WTC11 (cell line): ENCODE measurements at regions of chr7 and their contacts with region 1.

Region 1: DNA sequence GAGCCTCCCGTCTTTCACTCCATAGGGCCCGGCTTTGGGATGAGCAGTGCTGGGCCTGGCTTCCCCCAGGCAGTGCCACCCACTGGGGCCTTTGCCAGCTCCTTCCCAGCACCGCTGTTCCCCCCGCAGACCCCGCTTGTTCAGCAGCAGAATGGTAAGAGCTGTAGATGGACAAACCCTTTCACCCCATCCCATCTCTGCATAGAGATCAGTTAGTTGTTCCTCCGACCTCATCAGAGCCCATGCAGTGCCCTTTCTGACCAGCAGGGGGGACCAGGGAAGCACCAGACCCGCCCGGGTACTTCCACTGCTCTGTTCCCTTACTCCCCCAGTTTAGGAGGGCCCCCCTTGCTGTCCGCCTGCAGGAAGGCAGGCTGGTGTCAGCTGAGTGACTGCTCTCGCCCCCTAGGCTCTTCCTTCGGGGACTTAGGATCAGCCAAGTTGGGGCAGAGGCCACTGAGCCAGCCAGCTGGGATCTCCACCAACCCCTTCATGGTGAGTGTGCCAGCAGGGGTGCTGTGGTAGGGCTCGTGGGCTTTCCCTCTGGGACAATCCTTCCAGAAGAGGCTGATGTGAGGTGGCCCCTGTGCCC is 9.8 kb downstream of the SAP25 start:
- DNase-seq: peak; percentile 94
- ATAC-seq: peak; percentile 72
- H3K4me3 Mint-ChIP-seq: no peak overlapping the region
- H3K27ac Mint-ChIP-seq: no peak overlapping the region
- H3K4me1 Mint-ChIP-seq: peaks cover 23% of the 10 kb centered on the region
- H3K27me3 Mint-ChIP-seq: no peaks in the 10 kb centered on the region; the same call in 1 of the 2 replicates
- CTCF ChIP-seq: peak; percentile 99

Region 2: GRCh38 chr7:100428199-100428966 is 135.5 kb before region 1 on chr7 and contains the start of gene ZCWPW1:
- CTCF ChIA-PET with region 1: interaction called, 10 read pairs
- POLR2A ChIA-PET with region 1: no interaction called
- DNase-seq: peak; percentile 95
- ATAC-seq: peak; percentile 47
- H3K4me3 Mint-ChIP-seq: peak within 1 kb of the TSS; percentile 97
- H3K27ac Mint-ChIP-seq: peak within 1 kb of the TSS; percentile 100
- H3K4me1 Mint-ChIP-seq: peaks cover 19% of the 10 kb centered on the region
- H3K27me3 Mint-ChIP-seq: peaks cover 30% of the 10 kb centered on the region
- CTCF ChIP-seq: no peak
- total RNA-seq, gene ZCWPW1: 1.4 to 1.5 TPM (median 1.4 TPM) in 3 replicates

Region 3: DNA sequence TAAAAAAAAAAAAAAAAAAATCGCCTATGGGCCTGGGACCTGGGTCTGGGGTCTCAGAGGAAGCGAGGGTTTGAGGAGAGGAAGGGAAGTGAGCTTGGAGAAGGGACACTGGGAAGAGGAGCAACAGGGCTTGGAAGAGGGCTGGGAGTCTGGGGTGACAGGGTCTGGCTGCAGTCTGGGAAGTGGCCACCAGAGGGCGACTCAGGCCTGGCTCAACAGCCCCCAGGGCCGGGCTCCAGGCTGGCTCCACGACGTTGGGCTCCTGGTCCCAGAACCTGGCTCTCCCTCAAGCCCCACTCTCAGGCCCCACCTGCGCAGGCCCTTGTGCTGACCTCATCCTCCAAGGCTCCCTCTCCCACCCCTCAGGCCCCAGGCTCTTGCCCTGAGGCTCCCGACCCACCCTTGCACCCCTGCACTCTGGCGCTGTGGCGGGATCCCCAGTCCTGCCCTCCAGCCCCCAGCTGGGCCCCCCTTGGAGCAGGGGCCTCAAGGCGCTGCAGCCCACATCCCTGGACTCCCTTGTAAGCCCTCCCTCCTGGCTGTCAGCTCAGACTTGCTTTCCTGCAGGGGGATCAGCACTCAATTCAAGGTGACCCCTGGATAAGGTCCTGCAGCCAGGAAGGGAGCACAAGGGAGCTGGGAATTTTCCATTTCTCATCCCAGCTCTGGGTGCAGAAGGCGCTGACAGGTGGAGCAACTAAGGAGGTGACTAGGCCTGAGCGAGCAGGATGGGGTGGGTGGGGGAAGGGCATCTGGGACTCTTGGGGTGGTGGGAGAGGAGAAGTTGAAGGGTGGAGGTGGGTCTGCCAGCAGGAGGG is 94.5 kb before region 1 on chr7:
- CTCF ChIA-PET with region 1: interaction called, 56 read pairs
- POLR2A ChIA-PET with region 1: no interaction called
- DNase-seq: peak; percentile 95
- ATAC-seq: peak; percentile 85
- H3K4me3 Mint-ChIP-seq: no peak overlapping the region
- H3K27ac Mint-ChIP-seq: no peak overlapping the region
- H3K4me1 Mint-ChIP-seq: peaks cover 13% of the 10 kb centered on the region; the same call in 1 of the 2 replicates
- H3K27me3 Mint-ChIP-seq: no peaks in the 10 kb centered on the region
- CTCF ChIP-seq: peak; percentile 97

Region 4: GRCh38 chr7:100489824-100490223 is 74.1 kb before region 1 on chr7:
- CTCF ChIA-PET with region 1: interaction called, 15 read pairs
- POLR2A ChIA-PET with region 1: no interaction called
- DNase-seq: peak; percentile 85
- ATAC-seq: peak; percentile 63
- H3K4me3 Mint-ChIP-seq: no peak overlapping the region
- H3K27ac Mint-ChIP-seq: no peak overlapping the region
- H3K4me1 Mint-ChIP-seq: peaks cover 36% of the 10 kb centered on the region
- H3K27me3 Mint-ChIP-seq: peaks cover 17% of the 10 kb centered on the region
- CTCF ChIP-seq: no peak

Region 5: DNA sequence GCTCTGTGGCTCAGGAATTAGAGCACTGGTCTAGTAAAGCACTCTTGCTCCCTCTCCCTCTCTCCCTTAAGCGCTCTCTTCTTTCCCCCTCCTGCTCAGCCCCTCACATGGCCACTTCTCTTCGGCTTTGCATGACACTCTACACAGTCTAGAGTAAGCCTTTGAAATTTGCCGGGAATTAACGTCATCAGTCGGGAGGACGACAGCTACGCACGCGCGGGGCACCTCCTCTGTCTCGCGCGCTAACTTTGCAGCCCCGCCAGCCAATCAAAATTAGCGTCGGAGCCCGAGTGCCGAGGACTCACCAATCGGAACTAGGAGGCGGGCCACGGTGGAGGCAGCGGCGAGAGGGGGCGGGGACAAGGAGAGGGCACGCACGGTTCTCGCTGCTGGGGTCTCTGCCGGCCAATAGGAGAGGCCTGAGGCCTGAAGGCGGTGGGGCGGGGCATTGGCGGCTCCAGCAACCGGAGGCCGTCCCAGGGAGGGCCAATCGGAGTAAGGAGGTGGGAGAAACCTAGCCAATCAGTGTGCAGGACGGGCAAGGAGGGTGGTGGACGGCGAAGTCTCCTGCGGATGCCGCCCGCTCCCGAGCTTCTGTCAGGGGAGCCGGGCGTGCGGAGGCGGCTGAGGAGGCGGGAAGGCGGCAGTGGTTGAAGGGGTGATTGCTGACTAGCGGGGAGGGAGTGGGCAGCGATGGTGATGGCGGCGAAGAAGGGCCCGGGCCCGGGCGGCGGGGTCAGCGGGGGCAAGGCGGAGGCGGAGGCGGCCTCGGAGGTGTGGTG is 25.1 kb before region 1 on chr7 and contains the start of gene AGFG2:
- CTCF ChIA-PET with region 1: interaction called, 58 read pairs
- POLR2A ChIA-PET with region 1: interaction called, 4 read pairs
- DNase-seq: peak; percentile 100
- ATAC-seq: peak; percentile 98
- H3K4me3 Mint-ChIP-seq: peak within 1 kb of the TSS; percentile 91
- H3K27ac Mint-ChIP-seq: peak within 1 kb of the TSS; percentile 94
- H3K4me1 Mint-ChIP-seq: peaks cover 44% of the 10 kb centered on the region
- H3K27me3 Mint-ChIP-seq: peaks cover 27% of the 10 kb centered on the region
- CTCF ChIP-seq: no peak
- total RNA-seq, gene AGFG2: 6.4 to 7.4 TPM (median 7.4 TPM) in 3 replicates

Region 6: GRCh38 chr7:100586266-100587025 is 22.5 kb after region 1 on chr7 and contains the start of gene FBXO24:
- CTCF ChIA-PET with region 1: interaction called, 44 read pairs
- POLR2A ChIA-PET with region 1: interaction called, 4 read pairs
- DNase-seq: peak; percentile 99
- ATAC-seq: peak; percentile 85
- H3K4me3 Mint-ChIP-seq: peak within 1 kb of the TSS; percentile 99
- H3K27ac Mint-ChIP-seq: peak within 1 kb of the TSS; percentile 100
- H3K4me1 Mint-ChIP-seq: peaks cover 42% of the 10 kb centered on the region
- H3K27me3 Mint-ChIP-seq: peaks cover 30% of the 10 kb centered on the region
- CTCF ChIP-seq: no peak
- total RNA-seq, gene FBXO24: 0.70 to 1.3 TPM (median 0.94 TPM) in 3 replicates

Region 7: GRCh38 chr7:100632951-100633717 is 69.2 kb after region 1 on chr7:
- CTCF ChIA-PET with region 1: interaction called, 10 read pairs
- POLR2A ChIA-PET with region 1: no interaction called
- DNase-seq: peak; percentile 67
- ATAC-seq: peak; percentile 40
- H3K4me3 Mint-ChIP-seq: peak overlapping the region; percentile 76
- H3K27ac Mint-ChIP-seq: no peak overlapping the region
- H3K4me1 Mint-ChIP-seq: peaks cover 3% of the 10 kb centered on the region
- H3K27me3 Mint-ChIP-seq: peaks cover 41% of the 10 kb centered on the region
- CTCF ChIP-seq: no peak; the same call in 1 of the 2 replicates

Region 8: GRCh38 chr7:100763556-100764140 is 199.7 kb after region 1 on chr7:
- CTCF ChIA-PET with region 1: no interaction called
- POLR2A ChIA-PET with region 1: no interaction called
- DNase-seq: no peak
- ATAC-seq: no peak
- H3K4me3 Mint-ChIP-seq: no peak overlapping the region
- H3K27ac Mint-ChIP-seq: no peak overlapping the region
- H3K4me1 Mint-ChIP-seq: 0 out of 2 replicates have a peak, but pooled peaks cover 2% of the 10 kb centered on the region
- H3K27me3 Mint-ChIP-seq: no peaks in the 10 kb centered on the region
- CTCF ChIP-seq: no peak